Naive thymus-derived CD4-positive, alpha-beta T cell (primary cell): ENCODE measurements at regions of chr12 and their contacts with region 1.

Region 1: DNA sequence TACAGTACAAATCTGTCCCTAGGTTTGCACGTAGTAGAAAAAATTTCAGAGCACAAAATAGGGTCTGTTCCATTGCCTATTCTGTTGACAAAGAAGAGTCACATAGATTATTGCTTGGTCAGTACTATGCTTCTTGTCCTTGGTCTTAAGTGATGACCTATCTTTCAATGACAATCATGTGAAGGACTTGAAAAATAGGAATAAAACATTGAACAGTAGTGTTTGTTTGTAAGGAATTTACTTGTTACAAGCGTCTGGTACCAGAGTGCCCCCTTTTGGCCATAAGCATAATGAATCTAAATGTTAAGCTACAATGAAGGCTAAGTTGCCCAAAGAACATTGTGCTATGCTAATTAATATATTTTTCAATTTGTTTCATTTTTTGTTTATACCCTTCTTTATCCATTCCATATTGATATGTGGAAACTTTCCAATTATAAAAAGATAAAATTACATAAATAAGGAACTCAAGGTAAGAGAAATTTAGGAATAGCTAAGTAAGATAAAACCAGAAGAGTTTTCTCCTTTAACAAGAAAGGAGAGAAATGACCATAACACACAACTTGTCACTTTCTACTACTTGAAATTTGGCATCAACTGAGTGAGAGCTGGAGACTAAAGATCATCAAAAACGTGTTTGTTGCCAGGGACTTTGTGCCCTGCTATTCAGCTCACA is 204.7 kb downstream of the EPS8 start:
- DNase-seq: peak in 7 of 9 donors; percentile 40 to 65 (median 56)
- ATAC-seq: peak; percentile 78
- H3K4me3 ChIP-seq: no peak overlapping the region
- H3K4me3 Mint-ChIP-seq: no peak overlapping the region
- H3K27ac ChIP-seq: no peak overlapping the region
- H3K27ac Mint-ChIP-seq: no peak overlapping the region
- H3K4me1 ChIP-seq: peaks cover 0 to 4% of the 10 kb centered on the region in 2 donors
- H3K4me1 Mint-ChIP-seq: peaks cover 1 to 21% (median 15%) of the 10 kb centered on the region in 7 donors
- H3K27me3 ChIP-seq: no peaks in the 10 kb centered on the region
- H3K27me3 Mint-ChIP-seq: peaks cover 0 to 3% (median 0%) of the 10 kb centered on the region in 5 donors

Region 2: GRCh38 chr12:14723763-14724162 is 860.7 kb before region 1 on chr12:
- CTCF ChIA-PET with region 1: no interaction called
- POLR2A ChIA-PET with region 1: no interaction called
- intact Hi-C with region 1: loop called in 1 of 2 experiments (anchors 2 kb)
- DNase-seq: peak; percentile 19 to 67 (median 59)
- ATAC-seq: peak; percentile 83
- H3K4me3 ChIP-seq: no peak overlapping the region
- H3K4me3 Mint-ChIP-seq: no peak overlapping the region
- H3K27ac ChIP-seq: no peak overlapping the region
- H3K27ac Mint-ChIP-seq: no peak overlapping the region
- H3K4me1 ChIP-seq: no peaks in the 10 kb centered on the region
- H3K4me1 Mint-ChIP-seq: peaks cover 0 to 4% (median 0%) of the 10 kb centered on the region in 7 donors
- H3K27me3 ChIP-seq: no peaks in the 10 kb centered on the region
- H3K27me3 Mint-ChIP-seq: peaks cover 0 to 34% (median 10%) of the 10 kb centered on the region in 5 donors

Region 3: GRCh38 chr12:15227004-15227679 is 357.4 kb before region 1 on chr12:
- CTCF ChIA-PET with region 1: interaction called, 3 read pairs
- POLR2A ChIA-PET with region 1: no interaction called
- intact Hi-C with region 1: loop called in 1 of 2 experiments (anchors 1 kb)
- DNase-seq: peak in 4 of 9 donors; percentile 10 to 25 (median 20)
- ATAC-seq: peak; percentile 53
- H3K4me3 ChIP-seq: no peak overlapping the region
- H3K4me3 Mint-ChIP-seq: no peak overlapping the region
- H3K27ac ChIP-seq: no peak overlapping the region
- H3K27ac Mint-ChIP-seq: no peak overlapping the region
- H3K4me1 ChIP-seq: no peaks in the 10 kb centered on the region
- H3K4me1 Mint-ChIP-seq: peaks cover 0 to 5% (median 0%) of the 10 kb centered on the region in 7 donors
- H3K27me3 ChIP-seq: no peaks in the 10 kb centered on the region
- H3K27me3 Mint-ChIP-seq: peaks cover 46 to 58% (median 50%) of the 10 kb centered on the region in 5 donors

Region 4: DNA sequence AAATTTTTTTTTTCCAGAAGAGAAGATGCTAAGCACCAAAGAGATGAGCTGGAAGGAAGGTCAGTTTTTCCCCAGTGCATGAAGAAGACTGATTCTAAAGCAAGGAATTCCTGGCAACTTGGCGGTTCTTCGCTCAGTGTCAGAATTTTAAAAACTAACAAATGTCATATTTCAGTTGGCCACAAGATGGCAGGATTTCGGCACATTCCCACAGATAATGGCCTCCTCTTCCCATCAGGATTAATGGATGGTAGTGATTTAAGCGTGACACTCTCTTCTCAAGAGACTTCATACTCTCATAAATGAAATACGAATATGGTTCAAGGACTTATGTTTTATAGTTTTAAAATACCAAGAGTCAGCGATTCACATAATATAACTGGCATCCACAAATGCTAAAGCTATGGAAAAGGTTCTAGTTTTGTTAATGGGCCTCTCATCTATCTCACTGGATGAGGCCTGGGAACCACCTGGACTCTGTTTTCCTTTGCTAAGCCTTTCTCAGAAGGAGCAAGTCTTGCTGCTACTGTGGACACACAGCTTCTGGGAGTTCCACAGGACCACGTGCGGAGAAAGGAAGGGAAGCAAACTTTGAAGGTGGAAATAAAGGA is 308.3 kb before region 1 on chr12:
- CTCF ChIA-PET with region 1: interaction called, 25 read pairs
- POLR2A ChIA-PET with region 1: no interaction called
- intact Hi-C with region 1: loop called (anchors 1 kb)
- DNase-seq: peak in 2 of 9 donors; percentile 5 to 13
- ATAC-seq: no peak
- H3K4me3 ChIP-seq: no peak overlapping the region
- H3K4me3 Mint-ChIP-seq: no peak overlapping the region
- H3K27ac ChIP-seq: no peak overlapping the region
- H3K27ac Mint-ChIP-seq: no peak overlapping the region
- H3K4me1 ChIP-seq: no peaks in the 10 kb centered on the region
- H3K4me1 Mint-ChIP-seq: peaks cover 0 to 10% (median 0%) of the 10 kb centered on the region in 7 donors
- H3K27me3 ChIP-seq: no peaks in the 10 kb centered on the region
- H3K27me3 Mint-ChIP-seq: peaks cover 0 to 18% (median 15%) of the 10 kb centered on the region in 5 donors

Region 5: DNA sequence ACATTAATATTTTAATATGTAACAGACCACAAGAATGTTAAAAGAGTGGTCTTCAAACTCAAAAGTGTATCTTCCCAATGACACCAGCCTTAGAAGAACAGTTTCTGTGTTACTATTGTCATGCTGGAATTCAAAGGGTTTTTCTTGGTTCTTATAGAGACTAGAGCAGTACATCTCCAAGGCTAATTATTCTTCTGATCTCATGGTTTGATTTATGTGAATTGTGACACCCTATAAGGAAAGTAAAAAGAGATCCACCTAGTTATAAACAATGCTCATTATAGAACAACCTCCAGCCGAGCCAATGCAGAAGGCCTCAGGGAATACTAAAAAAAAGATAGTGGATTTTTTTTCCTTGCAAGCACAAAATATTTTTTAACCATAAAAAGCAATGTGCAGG is 196.7 kb before region 1 on chr12:
- CTCF ChIA-PET with region 1: no interaction called
- POLR2A ChIA-PET with region 1: no interaction called
- intact Hi-C with region 1: no loop called
- DNase-seq: no peak
- ATAC-seq: no peak
- H3K4me3 ChIP-seq: no peak overlapping the region
- H3K4me3 Mint-ChIP-seq: no peak overlapping the region
- H3K27ac ChIP-seq: no peak overlapping the region
- H3K27ac Mint-ChIP-seq: no peak overlapping the region
- H3K4me1 ChIP-seq: no peaks in the 10 kb centered on the region
- H3K4me1 Mint-ChIP-seq: no peaks in the 10 kb centered on the region
- H3K27me3 ChIP-seq: no peaks in the 10 kb centered on the region
- H3K27me3 Mint-ChIP-seq: peaks cover 0 to 12% (median 5%) of the 10 kb centered on the region in 5 donors

Region 6: DNA sequence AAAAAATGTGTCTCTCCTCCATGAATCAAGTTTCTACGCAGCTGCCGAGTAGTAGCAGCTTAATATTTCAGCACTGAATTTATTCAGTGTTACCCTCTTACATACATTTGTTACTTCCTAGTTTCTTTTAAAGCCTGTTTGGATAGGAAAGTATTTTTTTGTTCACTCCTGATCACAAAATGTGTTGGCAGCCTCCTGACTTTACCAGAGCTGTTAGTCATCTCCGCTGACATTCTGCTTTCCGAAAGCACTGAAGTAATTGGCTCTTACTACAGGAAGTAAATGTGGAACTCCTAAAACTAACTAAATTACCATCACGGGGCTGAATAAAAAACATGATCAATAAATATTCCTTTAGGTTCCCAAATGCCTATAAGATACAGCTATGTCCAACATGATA is 20.8 kb before region 1 on chr12:
- CTCF ChIA-PET with region 1: interaction called, 7 read pairs
- POLR2A ChIA-PET with region 1: interaction called, 5 read pairs
- intact Hi-C with region 1: loop called in 1 of 2 experiments (anchors 1 kb)
- DNase-seq: peak in 6 of 9 donors; percentile 39 to 54 (median 50)
- ATAC-seq: peak; percentile 84
- H3K4me3 ChIP-seq: peak overlapping the region; percentile 38
- H3K4me3 Mint-ChIP-seq: peak overlapping the region; percentile 54 to 87 (median 82)
- H3K27ac ChIP-seq: peak overlapping the region; percentile 82
- H3K27ac Mint-ChIP-seq: peak overlapping the region; percentile 87 to 96 (median 94)
- H3K4me1 ChIP-seq: peaks cover 0 to 37% of the 10 kb centered on the region in 2 donors
- H3K4me1 Mint-ChIP-seq: peaks cover 36 to 89% (median 77%) of the 10 kb centered on the region in 7 donors
- H3K27me3 ChIP-seq: no peaks in the 10 kb centered on the region
- H3K27me3 Mint-ChIP-seq: peaks cover 0 to 5% (median 0%) of the 10 kb centered on the region in 5 donors

Region 7: GRCh38 chr12:15732341-15733061 is 148.0 kb after region 1 on chr12:
- CTCF ChIA-PET with region 1: no interaction called
- POLR2A ChIA-PET with region 1: no interaction called
- intact Hi-C with region 1: no loop called
- DNase-seq: no peak
- ATAC-seq: no peak
- H3K4me3 ChIP-seq: no peak overlapping the region
- H3K4me3 Mint-ChIP-seq: no peak overlapping the region
- H3K27ac ChIP-seq: no peak overlapping the region
- H3K27ac Mint-ChIP-seq: no peak overlapping the region
- H3K4me1 ChIP-seq: no peaks in the 10 kb centered on the region
- H3K4me1 Mint-ChIP-seq: no peaks in the 10 kb centered on the region
- H3K27me3 ChIP-seq: no peaks in the 10 kb centered on the region
- H3K27me3 Mint-ChIP-seq: peaks cover 0 to 25% (median 9%) of the 10 kb centered on the region in 5 donors